CD8-positive, alpha-beta T cell (primary cell): ENCODE measurements at regions of chr3 and their contacts with region 1.

Region 1: GRCh38 chr3:30672959-30673358 is 66.6 kb downstream of the TGFBR2 start:
- DNase-seq: no peak
- ATAC-seq: no peak
- H3K4me3 ChIP-seq: no peak overlapping the region
- H3K4me3 Mint-ChIP-seq: peak overlapping the region; percentile 15
- H3K27ac ChIP-seq: peak overlapping the region; percentile 2 to 7
- H3K27ac Mint-ChIP-seq: peak overlapping the region; percentile 72
- H3K4me1 ChIP-seq: peaks cover 93% of the 10 kb centered on the region
- H3K4me1 Mint-ChIP-seq: peaks cover 98% of the 10 kb centered on the region
- H3K27me3 ChIP-seq: no peaks in the 10 kb centered on the region
- H3K27me3 Mint-ChIP-seq: no peaks in the 10 kb centered on the region
- CTCF ChIP-seq: no peak

Region 2: GRCh38 chr3:30644593-30645012 is 28.4 kb before region 1 on chr3:
- CTCF ChIA-PET with region 1: interaction called, 4 read pairs
- POLR2A ChIA-PET with region 1: interaction called, 3 read pairs
- intact Hi-C with region 1: loop called in 1 of 2 experiments (anchors 5 kb)
- DNase-seq: peak in 8 of 9 experiments; percentile 26 to 86 (median 62)
- ATAC-seq: peak; percentile 67
- H3K4me3 ChIP-seq: peak overlapping the region in 1 of 2 experiments; percentile 13
- H3K4me3 Mint-ChIP-seq: peak overlapping the region; percentile 59
- H3K27ac ChIP-seq: peak overlapping the region; percentile 50 to 77
- H3K27ac Mint-ChIP-seq: peak overlapping the region; percentile 92
- H3K4me1 ChIP-seq: peaks cover 100% of the 10 kb centered on the region
- H3K4me1 Mint-ChIP-seq: peaks cover 94% of the 10 kb centered on the region
- H3K27me3 ChIP-seq: no peaks in the 10 kb centered on the region
- H3K27me3 Mint-ChIP-seq: no peaks in the 10 kb centered on the region
- CTCF ChIP-seq: no peak

Region 3: GRCh38 chr3:30878862-30879261 is 205.9 kb after region 1 on chr3:
- CTCF ChIA-PET with region 1: no interaction called
- POLR2A ChIA-PET with region 1: no interaction called
- intact Hi-C with region 1: no loop called
- DNase-seq: no peak
- ATAC-seq: no peak
- H3K4me3 ChIP-seq: no peak overlapping the region
- H3K4me3 Mint-ChIP-seq: no peak overlapping the region
- H3K27ac ChIP-seq: no peak overlapping the region
- H3K27ac Mint-ChIP-seq: no peak overlapping the region
- H3K4me1 ChIP-seq: no peaks in the 10 kb centered on the region
- H3K4me1 Mint-ChIP-seq: no peaks in the 10 kb centered on the region
- H3K27me3 ChIP-seq: no peaks in the 10 kb centered on the region
- H3K27me3 Mint-ChIP-seq: peaks cover under 1% of the 10 kb centered on the region
- CTCF ChIP-seq: no peak